Esophagus muscularis mucosa (tissue), 4 donors: ENCODE measurements at regions of chr13 and their contacts with region 1.

Region 1: GRCh38 chr13:48303359-48304142 is at the start of gene RB1:
- DNase-seq: peak; percentile 95
- H3K4me3 ChIP-seq: peak within 1 kb of the TSS; percentile 78 to 96 (median 94)
- H3K27ac ChIP-seq: peak within 1 kb of the TSS; percentile 99 to 100 (median 99)
- H3K4me1 ChIP-seq: peaks cover 23 to 35% (median 32%) of the 10 kb centered on the region in 4 donors
- H3K27me3 ChIP-seq: no peaks in the 10 kb centered on the region
- CTCF ChIP-seq: no peak
- EP300 ChIP-seq: no peak
- POLR2A ChIP-seq: peak; percentile 96
- total RNA-seq, gene RB1: 28.4 to 33.2 (median 29.9) TPM

Region 2: DNA sequence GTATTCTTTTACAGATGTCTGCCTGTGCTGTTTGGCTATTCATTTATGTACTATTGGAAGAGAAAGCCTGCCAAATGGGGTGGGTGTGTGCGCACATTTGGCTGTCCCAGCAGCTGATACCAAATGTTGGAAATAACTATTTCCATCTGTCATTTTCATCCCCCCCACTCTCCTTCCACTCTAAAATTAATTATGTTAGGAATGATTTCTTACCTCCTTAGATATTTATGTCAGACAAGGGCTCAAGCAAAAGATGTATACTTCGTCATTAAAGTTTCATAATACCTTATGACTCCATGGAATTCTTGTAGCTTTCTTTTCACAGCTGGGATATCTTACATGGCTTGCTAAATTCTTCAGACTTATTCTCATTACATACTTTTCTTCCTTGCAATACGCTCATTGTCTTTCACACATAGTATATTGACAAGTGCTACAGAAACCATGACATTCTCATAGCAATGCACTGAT is 51.9 kb before region 1 on chr13:
- intact Hi-C with region 1: loop called (anchors 5 kb)
- DNase-seq: no peak
- H3K4me3 ChIP-seq: no peak overlapping the region
- H3K27ac ChIP-seq: peak overlapping the region; percentile 5 to 56 (median 18)
- H3K4me1 ChIP-seq: peaks cover 58 to 67% (median 65%) of the 10 kb centered on the region in 4 donors
- H3K27me3 ChIP-seq: no peaks in the 10 kb centered on the region
- CTCF ChIP-seq: no peak
- EP300 ChIP-seq: no peak
- POLR2A ChIP-seq: no peak